ENCODE measurements at regions of chr15 and their contacts with region 1.

Region 1: DNA sequence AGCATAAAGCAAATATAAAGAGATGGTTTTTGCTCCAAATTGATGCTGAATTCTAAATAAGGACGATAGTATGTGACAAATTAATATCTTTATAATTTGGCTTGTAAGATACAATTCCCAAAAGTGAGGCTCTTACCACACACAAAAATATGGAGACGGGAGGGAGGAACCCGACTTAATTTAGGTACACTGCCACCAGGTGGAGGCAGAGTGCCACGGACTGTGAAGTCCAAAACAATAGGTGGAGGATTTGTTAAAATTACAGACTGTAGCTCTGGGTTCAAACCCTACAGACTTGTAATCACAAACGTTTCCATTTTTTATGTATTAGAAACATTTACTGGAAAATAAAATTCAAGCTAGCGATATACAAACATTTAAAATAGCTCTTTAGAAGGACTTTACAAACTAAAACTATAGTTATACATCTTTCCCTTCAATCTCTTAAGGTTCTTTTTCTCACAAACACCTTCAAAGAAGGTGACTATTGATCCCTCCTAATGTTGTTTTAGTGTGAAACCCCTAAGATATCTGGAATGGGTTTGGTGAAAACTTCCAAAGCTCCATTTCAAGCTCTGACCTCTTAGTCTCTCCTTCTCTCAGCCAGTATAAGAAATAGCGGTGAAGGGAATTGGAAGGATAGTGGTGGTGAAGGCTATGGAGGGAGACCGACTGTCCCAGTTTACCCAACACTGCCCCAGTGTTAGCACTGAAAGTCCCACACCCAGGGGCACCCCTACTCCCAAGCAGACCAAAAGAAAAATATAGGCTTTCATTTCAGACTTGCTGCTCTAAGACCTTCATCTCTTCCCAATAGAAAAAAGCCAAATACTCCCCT is 89.7 kb downstream of the AQP9 start:
- DNase-seq: peak; percentile 57
- H3K4me3 ChIP-seq: no peak overlapping the region
- H3K27ac ChIP-seq: no peak overlapping the region
- H3K4me1 ChIP-seq: peaks cover 50% of the 10 kb centered on the region
- H3K27me3 ChIP-seq: no peaks in the 10 kb centered on the region
- CTCF ChIP-seq: peak; percentile 84 to 88

Region 2: GRCh38 chr15:58269455-58270414 is 41.8 kb after region 1 on chr15:
- CTCF ChIA-PET with region 1: no interaction called
- dilution Hi-C with region 1: no loop called
- in situ Hi-C with region 1: no loop called
- intact Hi-C with region 1: loop called (anchors 1 kb)
- DNase-seq: peak; percentile 76
- H3K4me3 ChIP-seq: no peak overlapping the region
- H3K27ac ChIP-seq: peak overlapping the region; percentile 5
- H3K4me1 ChIP-seq: peaks cover 20% of the 10 kb centered on the region
- H3K27me3 ChIP-seq: no peaks in the 10 kb centered on the region
- CTCF ChIP-seq: peak; percentile 68 to 88

Region 3: GRCh38 chr15:58758138-58758537 is 530.2 kb after region 1 on chr15:
- CTCF ChIA-PET with region 1: no interaction called
- dilution Hi-C with region 1: no loop called
- in situ Hi-C with region 1: loop called in 1 of 2 experiments (anchors 25 kb)
- intact Hi-C with region 1: loop called (anchors 1 kb)
- DNase-seq: no peak
- H3K4me3 ChIP-seq: no peak overlapping the region
- H3K27ac ChIP-seq: no peak overlapping the region
- H3K4me1 ChIP-seq: no peaks in the 10 kb centered on the region
- H3K27me3 ChIP-seq: no peaks in the 10 kb centered on the region
- CTCF ChIP-seq: peak in 1 of 2 donors; percentile 14

Region 4: GRCh38 chr15:58839485-58839884 is 611.6 kb after region 1 on chr15:
- CTCF ChIA-PET with region 1: no interaction called
- dilution Hi-C with region 1: no loop called
- in situ Hi-C with region 1: no loop called
- intact Hi-C with region 1: loop called (anchors 5 kb)
- DNase-seq: peak; percentile 7
- H3K4me3 ChIP-seq: no peak overlapping the region
- H3K27ac ChIP-seq: no peak overlapping the region
- H3K4me1 ChIP-seq: peaks cover 3% of the 10 kb centered on the region
- H3K27me3 ChIP-seq: no peaks in the 10 kb centered on the region
- CTCF ChIP-seq: peak in 1 of 2 donors; percentile 37

Region 5: GRCh38 chr15:59048897-59049296 is 821.0 kb after region 1 on chr15:
- CTCF ChIA-PET with region 1: no interaction called
- dilution Hi-C with region 1: no loop called
- in situ Hi-C with region 1: no loop called
- intact Hi-C with region 1: loop called (anchors 5 kb)
- DNase-seq: no peak
- H3K4me3 ChIP-seq: no peak overlapping the region
- H3K27ac ChIP-seq: no peak overlapping the region
- H3K4me1 ChIP-seq: no peaks in the 10 kb centered on the region
- H3K27me3 ChIP-seq: no peaks in the 10 kb centered on the region
- CTCF ChIP-seq: no peak

Region 6: DNA sequence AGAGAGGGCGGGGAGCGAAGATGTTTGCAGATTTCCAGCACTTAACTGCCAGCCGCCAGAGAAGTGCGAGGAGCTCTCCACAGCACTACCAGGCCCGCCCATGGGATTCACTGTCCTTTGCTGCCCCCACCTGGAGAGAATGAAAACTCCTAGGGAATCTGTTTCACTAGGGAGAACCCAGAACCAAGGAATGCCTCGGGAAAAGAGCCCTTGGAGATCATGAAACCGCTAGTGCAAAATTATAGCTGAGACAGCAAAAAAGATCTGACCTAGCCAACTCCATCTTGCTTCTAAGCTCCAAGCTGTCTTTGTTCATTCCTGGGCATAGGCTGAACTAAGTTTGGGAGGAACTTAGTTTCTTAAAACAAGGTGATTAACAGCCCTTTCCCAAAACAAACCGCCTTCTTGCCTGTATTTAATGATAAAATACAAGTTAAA is 1301.1 kb after region 1 on chr15:
- CTCF ChIA-PET with region 1: no interaction called
- dilution Hi-C with region 1: no loop called
- in situ Hi-C with region 1: no loop called
- intact Hi-C with region 1: loop called (anchors 1 kb)
- DNase-seq: peak; percentile 83
- H3K4me3 ChIP-seq: no peak overlapping the region
- H3K27ac ChIP-seq: no peak overlapping the region
- H3K4me1 ChIP-seq: no peaks in the 10 kb centered on the region
- H3K27me3 ChIP-seq: no peaks in the 10 kb centered on the region
- CTCF ChIP-seq: peak; percentile 68 to 84